AG04450 (cell line): ENCODE measurements at regions of chr13 and their contacts with region 1.

Region 1: GRCh38 chr13:29905845-29906244 is 55.4 kb upstream of the UBL3 start:
- DNase-seq: no peak
- H3K4me3 ChIP-seq: no peak overlapping the region
- H3K27ac ChIP-seq: no peak overlapping the region
- H3K27me3 ChIP-seq: no peaks in the 10 kb centered on the region
- CTCF ChIP-seq: no peak

Region 2: GRCh38 chr13:29730253-29730652 is 175.6 kb before region 1 on chr13:
- CTCF ChIA-PET with region 1: no interaction called
- POLR2A ChIA-PET with region 1: no interaction called
- DNase-seq: no peak
- H3K4me3 ChIP-seq: no peak overlapping the region
- H3K27ac ChIP-seq: no peak overlapping the region
- H3K27me3 ChIP-seq: peaks cover 30% of the 10 kb centered on the region
- CTCF ChIP-seq: 0 out of 2 replicates have a peak, but pooled peaks have one; percentile 10

Region 3: DNA sequence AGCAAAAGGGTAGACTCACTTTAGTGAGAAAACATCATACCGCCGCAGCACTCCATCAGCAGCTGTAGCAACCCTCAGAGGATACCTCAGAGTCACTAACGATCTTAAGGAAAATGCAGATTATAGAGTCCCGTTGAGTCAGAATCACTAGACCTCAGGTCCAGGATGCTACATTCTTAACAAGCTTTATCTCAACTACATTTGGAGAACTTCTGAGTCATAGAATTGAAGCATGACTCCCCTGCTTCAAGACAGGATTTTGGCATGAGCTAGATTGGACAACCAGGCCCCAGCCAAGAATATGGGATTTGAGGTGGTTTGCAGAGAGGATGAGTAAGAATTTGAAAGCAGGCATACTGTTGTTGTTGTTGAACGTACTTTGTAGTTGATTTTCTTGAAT is 63.4 kb after region 1 on chr13:
- CTCF ChIA-PET with region 1: no interaction called
- POLR2A ChIA-PET with region 1: interaction called, 10 read pairs
- DNase-seq: peak; percentile 43
- H3K4me3 ChIP-seq: no peak overlapping the region
- H3K27ac ChIP-seq: no peak overlapping the region
- H3K27me3 ChIP-seq: no peaks in the 10 kb centered on the region
- CTCF ChIP-seq: no peak

Region 4: DNA sequence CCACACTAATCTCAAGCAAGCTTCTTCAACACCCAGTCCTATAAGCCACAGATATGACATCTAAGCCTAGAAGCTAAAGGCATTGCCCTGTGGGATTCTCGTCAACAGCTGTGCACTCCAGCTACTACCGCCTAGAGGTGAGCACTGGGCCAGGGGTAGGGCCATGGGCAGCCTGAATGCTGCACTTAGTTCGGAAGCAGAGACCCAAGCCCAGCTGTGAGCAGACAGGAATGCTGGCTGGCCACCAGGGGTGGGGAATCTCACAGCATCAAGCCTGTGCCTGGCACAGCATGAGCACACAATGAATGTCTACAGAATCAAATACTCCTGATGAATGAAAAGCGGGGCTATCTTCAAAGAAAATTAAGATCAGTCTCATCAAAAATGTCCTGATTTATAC is 112.0 kb after region 1 on chr13:
- CTCF ChIA-PET with region 1: no interaction called
- POLR2A ChIA-PET with region 1: no interaction called
- DNase-seq: no peak
- H3K4me3 ChIP-seq: no peak overlapping the region
- H3K27ac ChIP-seq: no peak overlapping the region
- H3K27me3 ChIP-seq: peaks cover 5% of the 10 kb centered on the region
- CTCF ChIP-seq: no peak

Region 5: GRCh38 chr13:30196025-30196424 is 290.2 kb after region 1 on chr13:
- CTCF ChIA-PET with region 1: no interaction called
- POLR2A ChIA-PET with region 1: no interaction called
- DNase-seq: no peak
- H3K4me3 ChIP-seq: no peak overlapping the region
- H3K27ac ChIP-seq: no peak overlapping the region
- H3K27me3 ChIP-seq: no peaks in the 10 kb centered on the region
- CTCF ChIP-seq: no peak